Lower leg skin (tissue), 4 donors: ENCODE measurements at regions of chr15 and their contacts with region 1.

Region 1: DNA sequence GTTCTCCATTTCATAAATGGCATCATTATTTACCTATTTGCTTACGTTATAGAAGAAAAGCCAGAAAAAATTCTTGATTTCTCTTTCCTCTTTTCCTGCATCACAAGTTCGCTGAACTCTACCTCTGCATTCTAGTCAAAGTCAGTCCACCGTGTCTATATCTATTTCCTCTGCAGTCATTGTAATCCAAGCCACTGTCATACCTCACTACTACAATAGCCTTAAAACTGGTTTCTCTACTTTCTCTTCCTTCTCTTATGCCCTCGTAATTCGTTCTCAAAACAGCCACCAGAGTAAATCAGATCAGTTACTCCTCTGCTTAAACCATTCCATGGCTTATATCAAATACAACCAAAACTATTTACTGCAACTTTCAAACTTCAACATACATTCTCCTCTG is 13.4 kb upstream of the FAM81A start:
- DNase-seq: no peak
- H3K4me3 ChIP-seq: no peak overlapping the region
- CTCF ChIP-seq: no peak
- POLR2A ChIP-seq: no peak

Region 2: DNA sequence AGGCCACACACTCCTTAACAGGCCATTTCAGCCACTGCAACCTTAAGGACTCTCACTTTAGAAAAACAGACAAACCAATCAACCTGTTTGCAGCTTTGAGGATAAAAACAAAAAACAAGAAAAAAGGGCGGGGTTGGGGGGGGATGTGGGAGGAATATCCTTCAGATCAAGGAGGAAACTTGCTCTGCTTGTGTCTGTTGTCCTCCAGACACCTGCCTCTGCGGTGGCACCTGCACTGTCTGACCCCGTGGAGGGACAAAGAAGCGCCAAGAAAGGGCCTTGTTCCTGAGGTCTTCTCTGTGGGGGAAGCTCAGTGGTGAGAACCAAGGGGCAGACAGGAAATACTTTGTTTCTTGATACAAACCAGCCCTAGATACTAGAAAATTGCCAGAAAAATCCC is 1647.6 kb before region 1 on chr15:
- intact Hi-C with region 1: loop called (anchors 5 kb)
- DNase-seq: no peak
- H3K4me3 ChIP-seq: no peak overlapping the region
- CTCF ChIP-seq: no peak
- POLR2A ChIP-seq: no peak